ENCODE measurements at regions of chr2 and their contacts with region 1.

Region 1: DNA sequence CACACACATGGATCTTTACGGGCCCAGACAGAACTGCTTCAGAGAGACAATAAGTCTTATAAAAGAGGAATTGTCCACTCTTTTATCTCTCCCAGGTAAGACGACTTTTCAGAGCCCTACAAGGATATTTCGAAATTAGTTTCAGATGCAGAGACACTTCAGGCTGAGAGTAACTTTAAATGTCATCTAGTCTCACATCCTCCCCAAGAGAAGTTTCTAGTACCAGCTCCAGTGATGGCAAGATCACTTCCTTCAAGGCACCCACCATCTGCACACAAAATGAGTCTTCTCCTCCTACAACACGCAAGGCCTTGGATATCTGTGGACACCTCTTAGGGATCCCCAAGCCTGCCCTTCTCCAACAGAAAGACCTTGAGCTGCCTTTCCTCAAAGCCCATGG is 39.0 kb upstream of the KLHL29 start:
- DNase-seq: no peak
- H3K4me3 ChIP-seq: no peak overlapping the region
- H3K27ac ChIP-seq: no peak overlapping the region
- H3K4me1 ChIP-seq: no peaks in the 10 kb centered on the region
- H3K27me3 ChIP-seq: no peaks in the 10 kb centered on the region
- CTCF ChIP-seq: no peak

Region 2: DNA sequence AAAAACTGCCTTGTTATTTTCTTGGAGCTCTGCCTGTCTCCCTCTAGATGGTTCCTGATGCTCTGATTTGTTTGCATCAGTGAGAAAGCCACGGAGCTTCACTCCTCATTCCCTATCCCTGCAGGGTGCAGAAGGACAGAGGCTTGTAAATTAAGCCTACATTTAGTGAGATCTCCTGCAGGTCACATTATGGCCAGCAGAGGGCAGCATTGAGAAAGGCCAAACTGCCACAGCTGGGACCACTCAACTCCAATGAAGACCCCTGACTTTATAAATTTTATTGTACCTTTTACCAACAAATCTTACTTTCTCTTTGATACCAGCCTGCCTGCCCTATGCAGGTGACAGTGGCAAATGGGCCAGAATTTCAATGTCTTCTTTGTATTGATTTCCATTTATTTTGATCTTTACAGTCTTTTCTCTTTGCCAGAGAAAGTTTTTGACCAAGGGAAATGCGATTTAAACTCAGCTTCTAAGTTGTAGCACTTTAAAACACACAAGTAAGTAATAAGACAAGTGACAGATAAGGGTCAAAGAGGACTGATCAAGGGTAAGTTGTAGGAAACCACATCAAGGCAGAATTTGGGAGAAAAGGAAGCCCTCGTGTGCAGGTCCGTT is 990.1 kb before region 1 on chr2:
- intact Hi-C with region 1: loop called (anchors 10 kb)
- DNase-seq: peak; percentile 50
- H3K4me3 ChIP-seq: no peak overlapping the region
- H3K27ac ChIP-seq: no peak overlapping the region
- H3K4me1 ChIP-seq: no peaks in the 10 kb centered on the region
- H3K27me3 ChIP-seq: no peaks in the 10 kb centered on the region
- CTCF ChIP-seq: peak; percentile 75

Region 3: DNA sequence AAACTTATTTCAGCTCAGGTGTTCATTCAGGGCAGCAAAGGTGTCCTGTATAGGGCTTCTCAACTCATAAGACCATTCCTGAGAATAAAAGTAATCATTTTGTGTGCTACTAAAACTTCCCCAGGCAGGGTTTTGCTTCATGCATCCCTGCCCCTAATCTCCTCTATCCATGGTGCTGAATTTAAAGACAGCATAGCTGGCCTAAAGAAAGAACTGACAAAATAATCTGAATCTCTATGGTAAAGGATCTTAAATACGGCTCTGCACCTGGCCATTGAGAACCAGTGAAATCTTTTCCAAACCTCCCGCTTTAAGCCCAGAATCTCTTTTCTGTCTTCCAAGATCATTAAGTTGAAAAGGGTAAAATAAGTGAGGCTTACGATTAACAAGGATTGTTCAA is 253.2 kb before region 1 on chr2:
- intact Hi-C with region 1: no loop called
- DNase-seq: no peak
- H3K4me3 ChIP-seq: no peak overlapping the region
- H3K27ac ChIP-seq: no peak overlapping the region
- H3K4me1 ChIP-seq: no peaks in the 10 kb centered on the region
- H3K27me3 ChIP-seq: no peaks in the 10 kb centered on the region
- CTCF ChIP-seq: no peak

Region 4: DNA sequence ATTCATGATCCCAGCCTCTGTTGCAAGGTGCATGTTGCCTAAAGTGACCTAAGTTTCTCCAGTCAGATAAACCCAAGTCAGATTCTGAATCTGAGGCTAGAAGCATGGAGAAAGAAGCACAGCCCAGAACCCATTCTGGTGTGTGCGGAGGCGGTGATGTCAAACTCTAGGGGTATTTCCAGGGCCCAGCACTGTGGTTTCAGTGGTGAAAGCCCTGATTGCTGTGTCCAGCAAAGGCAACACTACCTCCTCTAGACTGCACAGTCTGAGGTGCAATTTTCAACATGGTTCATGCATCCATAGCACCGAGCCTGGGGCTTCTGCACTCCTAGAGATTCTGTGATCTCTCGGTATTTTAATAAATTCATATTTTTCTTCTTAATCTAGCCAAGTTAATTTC is 225.9 kb before region 1 on chr2:
- intact Hi-C with region 1: no loop called
- DNase-seq: no peak
- H3K4me3 ChIP-seq: no peak overlapping the region
- H3K27ac ChIP-seq: no peak overlapping the region
- H3K4me1 ChIP-seq: no peaks in the 10 kb centered on the region
- H3K27me3 ChIP-seq: no peaks in the 10 kb centered on the region
- CTCF ChIP-seq: no peak

Measured in colonic mucosa (tissue), 4 donors.